Gastrocnemius medialis (tissue), 4 donors: ENCODE measurements at regions of chr2 and their contacts with region 1.

Region 1: GRCh38 chr2:45821564-45822271 is 170.2 kb downstream of the PRKCE start:
- DNase-seq: peak; percentile 91 to 93
- ATAC-seq: peak; percentile 63 to 78
- H3K4me3 ChIP-seq: no peak overlapping the region
- H3K27ac ChIP-seq: peak overlapping the region; percentile 87 to 91 (median 88)
- H3K4me1 ChIP-seq: peaks cover 37 to 53% of the 10 kb centered on the region in 2 donors
- H3K27me3 ChIP-seq: no peaks in the 10 kb centered on the region
- CTCF ChIP-seq: no peak
- POLR2A ChIP-seq: peak in 1 of 2 donors; percentile 34

Region 2: DNA sequence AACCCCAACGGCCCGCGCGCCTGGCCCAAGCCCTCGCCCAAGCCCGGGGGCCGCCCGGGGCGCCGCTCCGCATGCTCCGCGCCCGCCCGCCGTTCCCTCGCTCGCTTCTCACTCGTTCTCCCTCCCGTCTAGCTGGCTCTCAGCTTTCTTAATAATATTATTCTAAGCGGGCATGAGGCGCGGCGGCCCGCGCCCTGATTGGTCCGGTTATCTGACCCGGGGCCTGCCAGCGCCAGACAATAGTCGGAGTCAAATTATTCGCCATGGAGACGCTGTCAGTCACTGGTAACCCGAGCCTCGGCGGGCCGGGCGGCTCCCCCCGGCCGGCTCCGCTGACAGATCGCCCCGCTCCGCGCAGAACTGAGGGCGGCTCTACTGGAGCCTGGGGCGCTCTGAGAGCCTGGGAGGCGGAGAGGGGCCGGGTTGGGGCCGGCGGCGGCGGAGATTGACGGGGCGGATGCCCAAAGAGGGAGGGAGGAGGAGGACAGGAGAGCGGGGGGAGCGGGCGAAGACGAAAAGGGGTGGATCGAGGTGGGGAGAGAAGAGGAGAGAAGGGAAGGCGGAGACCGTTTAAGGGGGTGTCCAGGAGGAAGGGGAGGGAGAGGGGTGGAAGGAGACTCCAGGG is 812.3 kb before region 1 on chr2 and contains the start of gene SIX2:
- in situ Hi-C with region 1: no loop called
- intact Hi-C with region 1: loop called (anchors 5 kb)
- DNase-seq: peak; percentile 95 to 97
- ATAC-seq: peak; percentile 80 to 84
- H3K4me3 ChIP-seq: peak within 1 kb of the TSS; percentile 64 to 85 (median 72)
- H3K27ac ChIP-seq: peak within 1 kb of the TSS; percentile 90 to 97 (median 90)
- H3K4me1 ChIP-seq: peaks cover 20 to 49% of the 10 kb centered on the region in 2 donors
- H3K27me3 ChIP-seq: peaks cover 0 to 25% (median 0%) of the 10 kb centered on the region in 3 donors
- CTCF ChIP-seq: peak in 1 of 5 experiments; percentile 10
- POLR2A ChIP-seq: peak; percentile 87 to 96
- total RNA-seq, gene SIX2: 28.9 to 65.5 (median 50.5) TPM

Region 3: GRCh38 chr2:45699032-45699658 is 122.6 kb before region 1 on chr2:
- in situ Hi-C with region 1: no loop called
- intact Hi-C with region 1: loop called (anchors 2 kb)
- DNase-seq: no peak
- ATAC-seq: no peak
- H3K4me3 ChIP-seq: no peak overlapping the region
- H3K27ac ChIP-seq: no peak overlapping the region
- H3K4me1 ChIP-seq: peaks cover 2 to 15% of the 10 kb centered on the region in 2 donors
- H3K27me3 ChIP-seq: no peaks in the 10 kb centered on the region
- CTCF ChIP-seq: no peak
- POLR2A ChIP-seq: no peak

Region 4: DNA sequence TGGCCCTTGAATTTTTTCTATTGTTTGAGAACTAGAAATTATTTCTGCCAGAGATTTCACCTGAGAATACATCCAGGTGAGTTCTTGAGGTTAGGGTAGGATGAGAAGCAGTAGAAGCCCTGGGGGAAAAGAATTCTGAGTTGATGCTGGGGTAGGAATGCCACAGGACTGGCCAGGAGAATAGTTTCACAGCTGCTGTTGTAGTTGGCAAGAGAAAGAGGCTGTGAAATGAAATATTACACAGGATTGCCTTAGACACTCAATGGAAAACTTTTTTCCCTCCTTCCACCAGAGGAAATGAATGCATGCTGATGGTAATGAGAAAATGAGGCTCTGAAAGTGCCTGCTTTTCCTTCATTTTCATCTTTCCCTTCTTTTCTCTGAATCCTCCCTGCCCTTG is 115.7 kb before region 1 on chr2:
- in situ Hi-C with region 1: no loop called
- intact Hi-C with region 1: loop called (anchors 5 kb)
- DNase-seq: no peak
- ATAC-seq: no peak
- H3K4me3 ChIP-seq: no peak overlapping the region
- H3K27ac ChIP-seq: no peak overlapping the region
- H3K4me1 ChIP-seq: peaks cover 27 to 48% of the 10 kb centered on the region in 2 donors
- H3K27me3 ChIP-seq: no peaks in the 10 kb centered on the region
- CTCF ChIP-seq: no peak
- POLR2A ChIP-seq: no peak

Region 5: GRCh38 chr2:45763255-45763654 is 58.5 kb before region 1 on chr2:
- in situ Hi-C with region 1: no loop called
- intact Hi-C with region 1: loop called (anchors 5 kb)
- DNase-seq: no peak
- ATAC-seq: no peak
- H3K4me3 ChIP-seq: no peak overlapping the region
- H3K27ac ChIP-seq: no peak overlapping the region
- H3K4me1 ChIP-seq: peaks cover 30 to 45% of the 10 kb centered on the region in 2 donors
- H3K27me3 ChIP-seq: no peaks in the 10 kb centered on the region
- CTCF ChIP-seq: no peak
- POLR2A ChIP-seq: no peak

Region 6: DNA sequence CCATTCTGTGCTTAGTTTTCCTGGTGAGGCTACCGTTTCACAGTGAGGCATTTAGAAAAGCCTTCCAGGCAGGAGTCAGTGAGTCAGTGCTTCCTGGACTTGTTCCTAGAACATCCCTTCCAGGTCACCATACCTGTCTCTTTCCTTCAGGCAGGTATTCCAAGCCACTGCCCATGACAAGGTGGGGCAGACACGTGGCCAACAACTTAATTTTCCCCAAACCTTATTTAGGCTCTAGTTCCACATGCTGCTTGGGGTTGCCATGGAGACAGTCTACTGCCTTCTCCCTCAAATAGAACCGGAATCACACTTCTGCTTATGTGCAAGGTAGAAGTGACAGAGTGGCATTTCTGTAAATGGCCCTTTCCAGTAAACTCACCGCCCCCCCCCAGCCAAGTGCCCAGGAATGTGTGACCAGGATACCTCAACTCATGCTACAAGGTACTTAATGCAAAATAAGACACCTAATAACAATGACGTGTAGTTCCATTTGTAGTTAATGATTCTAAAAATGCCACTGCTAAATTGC is 88.0 kb after region 1 on chr2:
- in situ Hi-C with region 1: no loop called
- intact Hi-C with region 1: no loop called
- DNase-seq: no peak
- ATAC-seq: peak; percentile 86
- H3K4me3 ChIP-seq: no peak overlapping the region
- H3K27ac ChIP-seq: peak overlapping the region in 1 of 4 donors; percentile 50
- H3K4me1 ChIP-seq: peaks cover 8 to 19% of the 10 kb centered on the region in 2 donors
- H3K27me3 ChIP-seq: no peaks in the 10 kb centered on the region
- CTCF ChIP-seq: no peak
- POLR2A ChIP-seq: no peak

Region 7: DNA sequence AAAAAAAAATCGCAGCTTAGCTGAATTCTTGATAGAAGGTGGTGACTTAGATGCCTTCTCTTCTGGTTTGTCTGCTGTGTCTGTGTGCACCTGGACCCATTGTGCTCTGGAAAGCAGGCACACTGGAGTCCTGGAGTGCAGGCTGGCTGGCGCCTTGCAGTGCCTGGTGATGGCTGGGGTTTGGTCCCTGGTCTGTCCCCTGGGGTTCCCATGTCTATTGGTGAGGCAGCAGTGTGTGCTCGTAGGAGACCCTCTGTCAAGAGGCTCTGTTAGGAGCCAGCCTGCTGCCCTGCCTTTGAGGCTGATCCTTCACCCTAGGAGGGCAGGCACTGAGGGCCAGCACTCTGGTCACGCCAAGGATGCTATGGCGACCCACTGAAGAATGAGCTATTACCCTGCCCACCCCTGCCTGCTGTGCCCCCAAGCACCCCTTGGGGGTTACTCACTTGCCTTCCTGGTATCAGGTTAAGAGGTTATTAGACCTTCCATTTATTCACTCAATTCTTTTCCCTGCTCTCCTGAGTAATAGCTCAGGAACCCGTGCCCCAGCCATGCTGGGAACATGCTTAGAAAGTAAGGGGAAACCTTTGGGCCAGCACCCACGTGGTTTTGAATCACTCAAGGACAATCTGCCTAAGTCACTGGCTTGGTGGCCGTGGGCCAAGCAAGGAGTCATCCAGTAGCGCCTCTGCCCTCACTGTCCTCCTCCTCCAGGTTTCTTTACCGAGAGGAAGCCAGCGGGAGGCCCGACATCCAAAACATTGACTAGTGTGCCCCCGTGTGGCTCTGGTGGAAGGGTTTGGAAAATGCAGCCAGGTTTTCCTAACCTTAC is 114.3 kb after region 1 on chr2:
- in situ Hi-C with region 1: no loop called
- intact Hi-C with region 1: loop called (anchors 1 kb)
- DNase-seq: peak; percentile 99 to 100
- ATAC-seq: peak; percentile 94
- H3K4me3 ChIP-seq: no peak overlapping the region
- H3K27ac ChIP-seq: peak overlapping the region; percentile 82 to 89 (median 86)
- H3K4me1 ChIP-seq: peaks cover 22 to 35% of the 10 kb centered on the region in 2 donors
- H3K27me3 ChIP-seq: no peaks in the 10 kb centered on the region
- CTCF ChIP-seq: peak; percentile 77 to 87 (median 80)
- POLR2A ChIP-seq: no peak

Region 8: GRCh38 chr2:46296840-46297545 is 475.3 kb after region 1 on chr2 and contains the start of gene EPAS1:
- in situ Hi-C with region 1: no loop called
- intact Hi-C with region 1: loop called (anchors 5 kb)
- DNase-seq: peak; percentile 91 to 92
- ATAC-seq: peak; percentile 75 to 76
- H3K4me3 ChIP-seq: peak within 1 kb of the TSS; percentile 81 to 99 (median 94)
- H3K27ac ChIP-seq: peak within 1 kb of the TSS; percentile 91 to 98 (median 97)
- H3K4me1 ChIP-seq: peaks cover 16 to 23% of the 10 kb centered on the region in 2 donors
- H3K27me3 ChIP-seq: no peaks in the 10 kb centered on the region
- CTCF ChIP-seq: no peak
- POLR2A ChIP-seq: peak; percentile 78 to 95
- total RNA-seq, gene EPAS1: 61.5 to 95.1 (median 90.0) TPM

Region 9: DNA sequence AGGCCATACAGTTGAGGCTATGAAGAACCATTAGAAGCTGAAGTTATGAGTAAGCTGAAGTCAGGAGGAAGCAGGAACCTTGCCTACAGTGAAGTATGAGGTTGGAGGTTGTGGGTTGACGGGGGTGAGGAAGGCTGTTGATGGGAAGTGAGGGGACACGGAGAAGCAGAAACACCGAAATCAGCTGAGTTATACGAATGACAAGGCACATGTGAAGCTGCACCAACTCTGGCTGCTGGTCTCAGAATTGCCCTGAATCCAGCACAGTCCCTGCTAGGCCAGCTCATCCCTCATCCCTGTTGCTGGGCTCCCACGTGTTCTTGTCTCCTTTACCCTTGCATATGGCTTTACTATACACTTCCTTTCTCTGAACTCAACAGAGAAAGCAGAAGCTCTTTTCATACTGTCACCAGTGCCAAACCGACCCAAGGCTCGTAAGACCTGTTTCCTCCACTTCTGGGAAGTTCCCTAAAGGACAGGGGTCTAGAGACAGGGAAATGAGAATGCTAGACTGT is 648.5 kb after region 1 on chr2:
- in situ Hi-C with region 1: no loop called
- intact Hi-C with region 1: no loop called
- DNase-seq: no peak
- ATAC-seq: peak in 1 of 2 donors; percentile 27
- H3K4me3 ChIP-seq: no peak overlapping the region
- H3K27ac ChIP-seq: no peak overlapping the region
- H3K4me1 ChIP-seq: no peaks in the 10 kb centered on the region
- H3K27me3 ChIP-seq: no peaks in the 10 kb centered on the region
- CTCF ChIP-seq: no peak
- POLR2A ChIP-seq: no peak